ENCODE measurements at regions of chr1 and their contacts with region 1.

Region 1: DNA sequence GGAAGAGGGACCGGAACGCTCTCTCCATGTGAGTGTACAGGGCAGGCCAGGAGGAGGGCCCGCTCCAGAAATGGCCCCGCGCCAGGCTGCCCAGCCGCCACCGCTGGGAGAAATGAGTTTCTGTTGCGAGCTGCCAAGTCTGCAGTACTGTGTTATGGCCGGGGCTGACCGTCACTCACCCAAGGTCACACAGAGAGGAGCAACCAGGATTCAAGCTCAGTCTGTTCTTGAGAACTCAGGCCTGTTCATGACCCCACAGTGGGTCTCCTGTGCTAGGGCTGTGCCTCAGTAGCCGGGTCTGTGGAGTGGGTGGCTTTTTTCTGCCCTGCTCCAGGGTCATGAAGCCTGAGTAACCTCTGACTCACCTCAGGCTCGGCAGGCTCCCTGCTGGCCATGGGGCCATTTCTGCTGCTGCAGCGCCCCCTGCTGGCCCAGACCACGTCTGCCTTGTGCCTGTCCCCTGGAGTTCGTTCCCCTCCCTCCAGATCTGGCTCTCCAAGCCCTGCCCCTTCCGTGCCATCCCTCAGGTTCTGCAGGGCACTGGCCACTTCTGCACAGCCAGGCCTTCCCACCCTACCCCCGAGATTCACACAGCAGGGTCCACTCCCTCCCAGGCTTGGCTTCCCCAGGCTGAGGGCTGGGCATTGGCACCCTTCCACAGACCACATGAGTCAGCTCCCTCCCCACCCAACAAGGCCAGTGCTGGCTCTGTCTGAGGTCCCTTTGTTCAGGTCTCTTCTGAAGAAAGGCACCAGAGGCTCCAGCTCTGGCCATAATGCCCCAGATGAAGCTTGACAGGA is 51.8 kb downstream of the EDN2 start:
- DNase-seq: peak; percentile 91
- ATAC-seq: peak; percentile 98
- H3K4me3 Mint-ChIP-seq: no peak overlapping the region
- H3K27ac Mint-ChIP-seq: no peak overlapping the region
- H3K4me1 Mint-ChIP-seq: no peaks in the 10 kb centered on the region
- H3K27me3 Mint-ChIP-seq: peaks cover 18% of the 10 kb centered on the region
- CTCF ChIP-seq: peak; percentile 90

Region 2: GRCh38 chr1:41268154-41268770 is 164.4 kb before region 1 on chr1:
- CTCF ChIA-PET with region 1: interaction called, 16 read pairs
- POLR2A ChIA-PET with region 1: no interaction called
- intact Hi-C with region 1: loop called (anchors 5 kb)
- DNase-seq: peak; percentile 68
- ATAC-seq: peak; percentile 74
- H3K4me3 Mint-ChIP-seq: no peak overlapping the region
- H3K27ac Mint-ChIP-seq: no peak overlapping the region
- H3K4me1 Mint-ChIP-seq: no peaks in the 10 kb centered on the region
- H3K27me3 Mint-ChIP-seq: no peaks in the 10 kb centered on the region
- CTCF ChIP-seq: peak; percentile 99

Region 3: GRCh38 chr1:41322835-41323627 is 109.7 kb before region 1 on chr1:
- CTCF ChIA-PET with region 1: interaction called, 10 read pairs
- POLR2A ChIA-PET with region 1: no interaction called
- intact Hi-C with region 1: no loop called
- DNase-seq: peak; percentile 60
- ATAC-seq: peak; percentile 81
- H3K4me3 Mint-ChIP-seq: no peak overlapping the region
- H3K27ac Mint-ChIP-seq: no peak overlapping the region
- H3K4me1 Mint-ChIP-seq: no peaks in the 10 kb centered on the region
- H3K27me3 Mint-ChIP-seq: no peaks in the 10 kb centered on the region
- CTCF ChIP-seq: peak; percentile 48

Region 4: DNA sequence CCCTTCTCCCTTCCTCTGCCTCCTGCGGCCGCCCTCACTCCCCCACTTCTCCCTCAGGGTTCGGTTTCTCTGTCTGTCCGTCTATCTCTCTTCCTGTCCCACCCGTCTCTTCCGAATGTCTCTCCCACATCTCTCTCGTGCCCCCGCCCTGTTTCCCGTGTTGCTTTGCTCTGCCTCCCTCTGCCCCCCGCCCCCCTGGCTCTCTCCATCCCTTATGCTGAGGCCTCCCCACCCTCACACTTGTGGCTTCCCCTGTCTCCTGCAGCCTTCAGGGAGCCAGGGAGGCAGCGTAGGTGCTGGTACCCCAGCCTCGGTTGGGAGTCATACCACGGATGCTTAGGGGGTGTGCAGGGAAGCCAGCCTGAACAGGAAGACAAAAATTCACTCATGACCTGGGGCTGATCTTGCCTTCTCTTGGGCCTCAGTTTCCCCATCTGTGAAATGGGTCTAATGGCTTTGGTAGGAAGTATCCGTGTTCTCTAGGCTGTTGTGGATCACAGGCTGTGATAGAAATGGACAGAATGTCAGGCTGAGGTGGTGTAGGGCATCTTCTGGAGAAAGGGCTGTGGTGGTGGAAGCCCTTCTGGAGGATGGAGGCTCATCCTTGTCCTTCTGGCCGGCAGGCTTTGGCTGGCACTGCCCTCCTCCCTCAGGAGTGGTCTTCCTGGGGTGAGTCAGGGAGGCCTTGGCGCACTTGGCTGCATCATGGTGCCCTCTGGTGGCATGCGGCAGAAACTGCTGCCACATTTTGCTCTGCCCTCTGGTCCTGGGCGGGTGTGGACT is 15.9 kb before region 1 on chr1:
- CTCF ChIA-PET with region 1: interaction called, 17 read pairs
- POLR2A ChIA-PET with region 1: no interaction called
- intact Hi-C with region 1: no loop called
- DNase-seq: peak; percentile 65
- ATAC-seq: peak; percentile 79
- H3K4me3 Mint-ChIP-seq: no peak overlapping the region
- H3K27ac Mint-ChIP-seq: no peak overlapping the region
- H3K4me1 Mint-ChIP-seq: no peaks in the 10 kb centered on the region
- H3K27me3 Mint-ChIP-seq: peaks cover 9% of the 10 kb centered on the region
- CTCF ChIP-seq: peak; percentile 94

Region 5: GRCh38 chr1:41447811-41448770 is 15.4 kb after region 1 on chr1:
- CTCF ChIA-PET with region 1: interaction called, 11 read pairs
- POLR2A ChIA-PET with region 1: no interaction called
- intact Hi-C with region 1: no loop called
- DNase-seq: no peak
- ATAC-seq: no peak
- H3K4me3 Mint-ChIP-seq: no peak overlapping the region
- H3K27ac Mint-ChIP-seq: no peak overlapping the region
- H3K4me1 Mint-ChIP-seq: no peaks in the 10 kb centered on the region
- H3K27me3 Mint-ChIP-seq: peaks cover 2% of the 10 kb centered on the region
- CTCF ChIP-seq: no peak

Measured in activated CD8-positive, alpha-beta T cell treated with anti-CD3 and anti-CD28 coated beads for 36 hours (primary cell).